ENCODE measurements at regions of chr19 and their contacts with region 1.

Region 1: DNA sequence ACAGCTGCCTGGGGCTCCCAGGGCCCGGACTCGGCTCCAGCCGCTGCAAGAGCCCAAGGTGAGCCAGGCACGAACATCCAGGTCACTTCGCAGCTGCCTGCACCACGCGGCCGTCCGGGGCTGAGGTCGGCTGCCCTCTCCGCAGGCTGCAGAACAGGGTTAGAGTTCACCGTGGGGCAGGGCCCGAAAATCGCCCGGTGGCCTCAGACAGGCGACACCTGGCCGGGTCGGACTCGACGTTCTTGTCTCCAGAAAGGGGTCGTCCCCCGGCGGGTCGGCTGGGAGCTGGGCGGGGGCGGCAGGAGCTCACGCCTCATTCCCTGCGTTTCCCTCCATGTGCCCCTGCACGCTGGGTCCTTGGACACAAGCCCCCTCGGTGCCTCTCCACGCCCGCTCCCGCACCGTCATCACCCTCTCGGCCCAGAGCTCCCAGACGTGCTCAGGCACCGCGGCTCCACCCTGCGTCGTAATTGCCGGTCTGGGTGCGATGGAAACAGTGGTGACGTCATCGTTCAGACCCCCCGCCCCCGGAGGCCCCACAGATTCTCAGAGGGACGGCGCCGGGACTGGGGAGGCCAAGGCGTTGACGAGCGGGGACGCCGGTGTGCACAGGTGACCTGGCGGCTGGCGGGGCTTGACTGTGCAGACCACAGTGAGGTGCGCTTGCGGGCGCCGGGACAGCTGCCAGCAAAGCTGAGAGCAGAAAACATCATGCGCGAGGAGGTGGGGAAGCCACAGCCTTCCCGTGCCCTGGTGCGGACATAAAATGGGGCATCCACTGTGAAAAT is 4.0 kb upstream of the GRIN3B start:
- DNase-seq: peak; percentile 55 to 94 (median 86)
- ATAC-seq: peak; percentile 84 to 87
- H3K4me3 Mint-ChIP-seq: peak overlapping the region; percentile 61 to 87 (median 80)
- H3K27ac Mint-ChIP-seq: peak overlapping the region; percentile 51 to 96 (median 94)
- H3K4me1 Mint-ChIP-seq: peaks cover 6 to 20% (median 19%) of the 10 kb centered on the region in 4 donors
- H3K27me3 Mint-ChIP-seq: peaks cover 5 to 30% (median 11%) of the 10 kb centered on the region in 5 donors

Region 2: GRCh38 chr19:1039646-1040475 is 43.6 kb after region 1 on chr19 and contains the start of gene ABCA7:
- POLR2A ChIA-PET with region 1: interaction called, 10 read pairs
- DNase-seq: peak; percentile 98 to 100 (median 99)
- ATAC-seq: peak; percentile 86 to 93
- H3K4me3 Mint-ChIP-seq: peak within 1 kb of the TSS; percentile 93 to 100 (median 99)
- H3K27ac Mint-ChIP-seq: peak within 1 kb of the TSS; percentile 92 to 98 (median 94)
- H3K4me1 Mint-ChIP-seq: peaks cover 28 to 63% (median 55%) of the 10 kb centered on the region in 4 donors
- H3K27me3 Mint-ChIP-seq: no peaks in the 10 kb centered on the region
- polyA plus RNA-seq, gene ABCA7: 4.2 to 14.4 (median 8.7) TPM

Region 3: GRCh38 chr19:1087813-1088415 is 91.7 kb after region 1 on chr19:
- POLR2A ChIA-PET with region 1: interaction called, 30 read pairs
- DNase-seq: peak in 8 of 10 donors; percentile 31 to 79 (median 62)
- ATAC-seq: peak; percentile 26 to 34
- H3K4me3 Mint-ChIP-seq: peak overlapping the region; percentile 54 to 79 (median 74)
- H3K27ac Mint-ChIP-seq: peak overlapping the region; percentile 86 to 98 (median 95)
- H3K4me1 Mint-ChIP-seq: peaks cover 22 to 70% (median 62%) of the 10 kb centered on the region in 4 donors
- H3K27me3 Mint-ChIP-seq: no peaks in the 10 kb centered on the region